ENCODE measurements at regions of chr1 and their contacts with region 1.

Region 1: GRCh38 chr1:59061876-59062275 is 235.0 kb upstream of the FGGY start:
- DNase-seq: peak; percentile 69 to 80
- H3K4me3 ChIP-seq: peak overlapping the region in 1 of 2 donors; percentile 16
- H3K27ac ChIP-seq: peak overlapping the region; percentile 72 to 86
- H3K4me1 ChIP-seq: peaks cover 0 to 10% of the 10 kb centered on the region in 2 donors
- H3K27me3 ChIP-seq: no peaks in the 10 kb centered on the region
- CTCF ChIP-seq: no peak
- POLR2A ChIP-seq: peak; percentile 43 to 57

Region 2: GRCh38 chr1:58989845-58990244 is 72.0 kb before region 1 on chr1:
- intact Hi-C with region 1: loop called (anchors 2 kb)
- DNase-seq: no peak
- H3K4me3 ChIP-seq: no peak overlapping the region
- H3K27ac ChIP-seq: no peak overlapping the region
- H3K4me1 ChIP-seq: no peaks in the 10 kb centered on the region
- H3K27me3 ChIP-seq: no peaks in the 10 kb centered on the region
- CTCF ChIP-seq: no peak
- POLR2A ChIP-seq: no peak

Region 3: GRCh38 chr1:59798600-59798999 is 736.7 kb after region 1 on chr1:
- intact Hi-C with region 1: no loop called
- DNase-seq: no peak
- H3K4me3 ChIP-seq: no peak overlapping the region
- H3K27ac ChIP-seq: no peak overlapping the region
- H3K4me1 ChIP-seq: no peaks in the 10 kb centered on the region
- H3K27me3 ChIP-seq: no peaks in the 10 kb centered on the region
- CTCF ChIP-seq: no peak
- POLR2A ChIP-seq: no peak

Measured in uterus (tissue), 4 donors.